ENCODE measurements at regions of chrX and their contacts with region 1.

Region 1: GRCh38 chrX:118807151-118808017 is 16.2 kb upstream of the ZCCHC12 start:
- DNase-seq: no peak
- H3K4me3 ChIP-seq: no peak overlapping the region
- H3K27ac ChIP-seq: no peak overlapping the region
- H3K4me1 ChIP-seq: peaks cover 0 to 7% (median 1%) of the 10 kb centered on the region in 4 donors
- H3K27me3 ChIP-seq: no peaks in the 10 kb centered on the region
- CTCF ChIP-seq: peak; percentile 35 to 62 (median 51)
- EP300 ChIP-seq: no peak
- POLR2A ChIP-seq: no peak

Region 2: DNA sequence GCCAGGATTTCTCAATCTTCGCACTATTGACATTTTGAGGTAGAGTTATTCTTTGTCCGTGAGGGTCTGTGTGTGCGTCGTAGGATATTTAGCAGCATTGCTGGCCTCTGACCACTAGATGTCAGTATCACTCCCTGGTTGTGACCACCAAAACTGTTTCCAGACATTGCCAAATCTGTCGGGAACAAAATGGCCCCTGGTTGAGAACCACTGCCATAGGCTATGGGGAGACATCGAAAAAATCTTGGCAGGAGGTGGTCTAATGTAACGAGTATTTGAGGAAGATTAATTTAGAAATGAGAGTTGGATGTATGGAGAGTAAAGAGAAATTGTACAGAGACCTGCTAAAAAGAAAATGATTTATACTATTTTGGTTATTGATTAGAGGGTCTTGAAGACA is 203.4 kb before region 1 on chrX:
- intact Hi-C with region 1: loop called (anchors 2 kb)
- DNase-seq: peak; percentile 76
- H3K4me3 ChIP-seq: no peak overlapping the region
- H3K27ac ChIP-seq: peak overlapping the region in 3 of 4 donors; percentile 34 to 59 (median 39)
- H3K4me1 ChIP-seq: peaks cover 0 to 10% (median 2%) of the 10 kb centered on the region in 4 donors
- H3K27me3 ChIP-seq: no peaks in the 10 kb centered on the region
- CTCF ChIP-seq: peak; percentile 58 to 81 (median 62)
- EP300 ChIP-seq: no peak
- POLR2A ChIP-seq: no peak

Region 3: DNA sequence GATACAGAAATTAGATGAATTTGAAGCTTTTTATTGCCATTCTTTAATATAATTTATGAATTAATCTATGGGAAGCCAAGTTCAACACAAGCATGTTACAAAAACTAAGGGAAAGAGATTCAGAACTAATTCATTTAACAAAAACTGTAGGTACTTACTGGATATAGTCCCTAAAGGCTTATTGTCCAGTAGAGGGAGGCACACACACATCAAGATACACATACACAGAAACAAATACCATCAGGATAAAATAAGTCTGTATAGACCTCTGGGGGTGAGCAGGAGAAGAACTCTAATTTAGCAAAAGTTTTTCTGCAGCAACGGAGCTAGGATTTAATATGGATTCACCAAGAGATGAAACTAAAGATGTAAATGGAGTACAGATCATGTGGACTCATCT is 163.0 kb before region 1 on chrX:
- intact Hi-C with region 1: loop called (anchors 2 kb)
- DNase-seq: no peak
- H3K4me3 ChIP-seq: no peak overlapping the region
- H3K27ac ChIP-seq: no peak overlapping the region
- H3K4me1 ChIP-seq: no peaks in the 10 kb centered on the region
- H3K27me3 ChIP-seq: no peaks in the 10 kb centered on the region
- CTCF ChIP-seq: peak in 3 of 4 experiments; percentile 26 to 38 (median 27)
- EP300 ChIP-seq: no peak
- POLR2A ChIP-seq: no peak

Region 4: GRCh38 chrX:118761939-118762707 is 45.3 kb before region 1 on chrX:
- intact Hi-C with region 1: loop called (anchors 5 kb)
- DNase-seq: no peak
- H3K4me3 ChIP-seq: no peak overlapping the region
- H3K27ac ChIP-seq: peak overlapping the region in 3 of 4 donors; percentile 14 to 50 (median 43)
- H3K4me1 ChIP-seq: peaks cover 0 to 12% (median 0%) of the 10 kb centered on the region in 4 donors
- H3K27me3 ChIP-seq: no peaks in the 10 kb centered on the region
- CTCF ChIP-seq: no peak
- EP300 ChIP-seq: no peak
- POLR2A ChIP-seq: no peak

Region 5: GRCh38 chrX:118974088-118974907 is 166.9 kb after region 1 on chrX and contains the start of gene LONRF3:
- intact Hi-C with region 1: no loop called
- DNase-seq: peak; percentile 94
- H3K4me3 ChIP-seq: peak within 1 kb of the TSS; percentile 58 to 68 (median 63)
- H3K27ac ChIP-seq: peak within 1 kb of the TSS; percentile 74 to 89 (median 83)
- H3K4me1 ChIP-seq: peaks cover 0 to 15% (median 10%) of the 10 kb centered on the region in 4 donors
- H3K27me3 ChIP-seq: no peaks in the 10 kb centered on the region
- CTCF ChIP-seq: no peak
- EP300 ChIP-seq: no peak
- POLR2A ChIP-seq: peak; percentile 92 to 94
- total RNA-seq, gene LONRF3: 14.4 to 26.8 (median 16.4) TPM

Region 6: GRCh38 chrX:119118780-119119395 is 311.5 kb after region 1 on chrX:
- intact Hi-C with region 1: no loop called
- DNase-seq: no peak
- H3K4me3 ChIP-seq: no peak overlapping the region
- H3K27ac ChIP-seq: no peak overlapping the region
- H3K4me1 ChIP-seq: no peaks in the 10 kb centered on the region
- H3K27me3 ChIP-seq: no peaks in the 10 kb centered on the region
- CTCF ChIP-seq: peak; percentile 23 to 63 (median 46)
- EP300 ChIP-seq: no peak
- POLR2A ChIP-seq: no peak

Measured in sigmoid colon (tissue), 7 donors.